ENCODE measurements at regions of chr16 and their contacts with region 1.

Region 1: GRCh38 chr16:77171745-77172635 is 19.0 kb upstream of the MON1B start:
- DNase-seq: peak; percentile 65
- ATAC-seq: peak; percentile 53
- H3K4me3 ChIP-seq: no peak overlapping the region
- H3K4me3 Mint-ChIP-seq: no peak overlapping the region
- H3K27ac ChIP-seq: no peak overlapping the region
- H3K27ac Mint-ChIP-seq: no peak overlapping the region
- H3K4me1 ChIP-seq: no peaks in the 10 kb centered on the region
- H3K4me1 Mint-ChIP-seq: no peaks in the 10 kb centered on the region
- H3K27me3 ChIP-seq: peaks cover 0 to 21% (median 13%) of the 10 kb centered on the region in 4 experiments
- H3K27me3 Mint-ChIP-seq: peaks cover 60% of the 10 kb centered on the region
- CTCF ChIP-seq: peak; percentile 86

Region 2: DNA sequence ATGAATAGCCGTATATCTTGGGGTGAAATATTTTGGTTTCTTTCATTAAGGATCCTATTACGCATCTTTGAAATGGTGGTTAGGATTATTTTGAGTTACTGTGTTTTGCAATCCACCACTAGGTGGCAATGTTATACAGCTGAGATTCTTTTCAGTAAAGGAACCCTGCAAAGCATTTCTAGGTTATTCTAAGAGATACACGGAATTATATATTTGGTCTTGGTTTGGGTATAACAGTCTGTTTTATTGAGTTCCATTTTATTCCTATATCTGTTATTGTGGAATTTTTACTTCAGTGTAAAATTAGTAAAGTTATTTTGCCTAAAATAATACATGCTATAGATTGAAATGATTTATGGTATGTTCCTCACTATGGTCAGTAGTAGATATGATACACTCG is 1382.8 kb before region 1 on chr16:
- CTCF ChIA-PET with region 1: interaction called, 21 read pairs
- POLR2A ChIA-PET with region 1: no interaction called
- intact Hi-C with region 1: no loop called
- DNase-seq: peak; percentile 60
- ATAC-seq: no peak
- H3K4me3 ChIP-seq: no peak overlapping the region
- H3K4me3 Mint-ChIP-seq: no peak overlapping the region
- H3K27ac ChIP-seq: no peak overlapping the region
- H3K27ac Mint-ChIP-seq: no peak overlapping the region
- H3K4me1 ChIP-seq: no peaks in the 10 kb centered on the region
- H3K4me1 Mint-ChIP-seq: no peaks in the 10 kb centered on the region
- H3K27me3 ChIP-seq: peaks cover 0 to 15% (median 3%) of the 10 kb centered on the region in 4 experiments
- H3K27me3 Mint-ChIP-seq: peaks cover 31% of the 10 kb centered on the region
- CTCF ChIP-seq: peak; percentile 94

Region 3: DNA sequence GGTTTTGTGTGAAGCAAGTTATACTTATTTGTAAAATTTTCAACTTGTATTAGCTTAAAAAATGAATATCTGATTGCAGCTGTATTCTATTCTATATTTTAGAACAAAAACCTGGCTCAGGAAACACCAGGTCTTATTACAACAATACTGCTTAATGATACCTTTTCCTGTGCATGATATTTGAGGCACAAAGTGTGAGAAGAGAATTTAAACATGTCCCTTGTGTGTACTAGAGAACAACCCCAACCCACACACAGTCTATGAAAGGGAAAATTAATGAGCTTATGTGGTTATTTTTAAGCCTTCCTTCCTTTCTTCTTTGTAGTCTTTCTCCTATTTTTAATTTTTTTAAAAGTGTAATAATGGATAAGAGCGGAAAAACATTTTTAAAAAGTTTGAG is 103.6 kb before region 1 on chr16:
- CTCF ChIA-PET with region 1: no interaction called
- POLR2A ChIA-PET with region 1: no interaction called
- intact Hi-C with region 1: no loop called
- DNase-seq: no peak
- ATAC-seq: no peak
- H3K4me3 ChIP-seq: no peak overlapping the region
- H3K4me3 Mint-ChIP-seq: no peak overlapping the region
- H3K27ac ChIP-seq: no peak overlapping the region
- H3K27ac Mint-ChIP-seq: no peak overlapping the region
- H3K4me1 ChIP-seq: peaks cover 0 to 4% of the 10 kb centered on the region in 2 donors
- H3K4me1 Mint-ChIP-seq: no peaks in the 10 kb centered on the region
- H3K27me3 ChIP-seq: no peaks in the 10 kb centered on the region
- H3K27me3 Mint-ChIP-seq: peaks cover 7% of the 10 kb centered on the region
- CTCF ChIP-seq: no peak

Region 4: DNA sequence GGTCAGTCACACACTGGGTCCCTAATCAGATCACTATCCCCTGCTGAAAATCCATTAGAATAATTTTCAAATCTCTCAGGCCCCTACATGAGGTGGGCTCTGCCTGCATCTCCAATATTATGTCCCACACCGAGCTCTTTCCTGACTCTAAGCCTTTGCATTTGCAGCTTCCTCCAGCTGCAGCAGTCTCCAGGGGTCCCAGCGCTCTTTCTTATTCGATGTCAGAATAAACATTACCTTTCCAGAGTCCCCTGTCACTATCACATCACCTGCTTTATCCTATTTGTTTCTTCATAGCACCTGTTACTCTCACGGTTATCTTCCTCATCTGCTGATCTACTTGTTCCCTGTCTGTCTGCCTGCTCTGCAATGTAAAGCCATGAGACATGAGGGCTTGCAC is 38.3 kb before region 1 on chr16:
- CTCF ChIA-PET with region 1: no interaction called
- POLR2A ChIA-PET with region 1: no interaction called
- intact Hi-C with region 1: no loop called
- DNase-seq: no peak
- ATAC-seq: no peak
- H3K4me3 ChIP-seq: no peak overlapping the region
- H3K4me3 Mint-ChIP-seq: no peak overlapping the region
- H3K27ac ChIP-seq: no peak overlapping the region
- H3K27ac Mint-ChIP-seq: no peak overlapping the region
- H3K4me1 ChIP-seq: no peaks in the 10 kb centered on the region
- H3K4me1 Mint-ChIP-seq: no peaks in the 10 kb centered on the region
- H3K27me3 ChIP-seq: peaks cover 0 to 3% (median 0%) of the 10 kb centered on the region in 4 experiments
- H3K27me3 Mint-ChIP-seq: peaks cover 8% of the 10 kb centered on the region
- CTCF ChIP-seq: no peak

Region 5: GRCh38 chr16:77157346-77158058 is 14.5 kb before region 1 on chr16:
- CTCF ChIA-PET with region 1: interaction called, 10 read pairs
- POLR2A ChIA-PET with region 1: no interaction called
- intact Hi-C with region 1: no loop called
- DNase-seq: no peak
- ATAC-seq: no peak
- H3K4me3 ChIP-seq: no peak overlapping the region
- H3K4me3 Mint-ChIP-seq: no peak overlapping the region
- H3K27ac ChIP-seq: no peak overlapping the region
- H3K27ac Mint-ChIP-seq: no peak overlapping the region
- H3K4me1 ChIP-seq: no peaks in the 10 kb centered on the region
- H3K4me1 Mint-ChIP-seq: no peaks in the 10 kb centered on the region
- H3K27me3 ChIP-seq: peaks cover 0 to 6% (median 1%) of the 10 kb centered on the region in 4 experiments
- H3K27me3 Mint-ChIP-seq: peaks cover 29% of the 10 kb centered on the region
- CTCF ChIP-seq: no peak

Region 6: DNA sequence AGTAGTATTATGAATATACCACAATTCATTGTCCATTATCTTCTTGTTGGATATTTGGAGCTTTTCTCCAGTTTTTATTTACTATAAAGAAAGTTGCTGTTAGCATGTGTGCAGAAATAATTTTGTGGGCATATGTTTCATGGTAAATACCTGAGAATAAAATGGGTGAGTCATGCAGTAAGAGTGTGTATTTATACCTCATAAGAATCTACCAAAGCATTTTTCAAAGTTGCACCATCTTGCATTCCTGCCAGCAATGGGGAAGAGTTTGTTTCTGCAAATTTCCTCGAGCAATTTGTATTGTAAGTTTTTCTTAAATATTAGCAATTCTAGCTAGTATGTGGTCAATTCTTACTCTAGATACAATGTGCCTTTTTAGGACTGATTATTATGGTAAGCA is 11.1 kb after region 1 on chr16:
- CTCF ChIA-PET with region 1: interaction called, 19 read pairs
- POLR2A ChIA-PET with region 1: no interaction called
- intact Hi-C with region 1: no loop called
- DNase-seq: no peak
- ATAC-seq: no peak
- H3K4me3 ChIP-seq: no peak overlapping the region
- H3K4me3 Mint-ChIP-seq: no peak overlapping the region
- H3K27ac ChIP-seq: no peak overlapping the region
- H3K27ac Mint-ChIP-seq: no peak overlapping the region
- H3K4me1 ChIP-seq: no peaks in the 10 kb centered on the region
- H3K4me1 Mint-ChIP-seq: no peaks in the 10 kb centered on the region
- H3K27me3 ChIP-seq: peaks cover 0 to 5% (median 0%) of the 10 kb centered on the region in 4 experiments
- H3K27me3 Mint-ChIP-seq: peaks cover 24% of the 10 kb centered on the region
- CTCF ChIP-seq: no peak

Region 7: DNA sequence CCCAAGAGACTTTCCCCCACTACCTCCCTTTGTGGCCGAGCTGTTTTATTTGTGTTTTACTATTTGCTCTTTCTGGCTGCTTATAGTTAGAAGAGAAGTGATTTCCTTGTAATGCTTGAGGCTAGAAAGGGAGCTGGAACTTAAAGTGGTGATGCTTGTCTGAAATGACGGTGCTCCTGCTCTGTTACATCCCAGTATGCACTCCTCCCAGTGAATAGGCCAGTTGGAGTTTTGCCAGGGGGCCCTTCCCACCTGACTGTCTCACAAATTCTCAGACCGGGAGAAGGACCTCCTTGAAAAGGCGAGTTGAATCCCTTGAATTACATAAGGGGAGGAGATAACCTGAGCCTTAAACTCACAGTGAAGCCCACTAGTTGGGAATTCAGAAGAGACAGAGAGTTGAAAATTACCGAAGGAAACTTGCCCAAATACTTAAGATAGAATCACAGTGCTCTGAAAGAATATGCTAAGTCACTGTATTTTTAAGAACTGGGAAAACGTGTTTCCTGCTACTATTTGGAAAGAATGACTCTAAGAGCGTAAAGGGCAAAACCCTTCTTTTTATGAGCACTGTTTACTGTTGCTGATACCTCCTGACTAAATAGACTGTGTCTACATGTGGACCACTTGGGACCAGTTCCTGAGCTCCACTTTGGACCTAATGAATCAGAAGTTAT is 765.6 kb after region 1 on chr16:
- CTCF ChIA-PET with region 1: no interaction called
- POLR2A ChIA-PET with region 1: no interaction called
- intact Hi-C with region 1: no loop called
- DNase-seq: no peak
- ATAC-seq: no peak
- H3K4me3 ChIP-seq: no peak overlapping the region
- H3K4me3 Mint-ChIP-seq: no peak overlapping the region
- H3K27ac ChIP-seq: no peak overlapping the region
- H3K27ac Mint-ChIP-seq: no peak overlapping the region
- H3K4me1 ChIP-seq: no peaks in the 10 kb centered on the region
- H3K4me1 Mint-ChIP-seq: no peaks in the 10 kb centered on the region
- H3K27me3 ChIP-seq: no peaks in the 10 kb centered on the region
- H3K27me3 Mint-ChIP-seq: peaks cover 5% of the 10 kb centered on the region
- CTCF ChIP-seq: no peak

Measured in B cell (primary cell).